Testis (tissue), 5 donors: ENCODE measurements at regions of chr17 and their contacts with region 1.

Region 1: GRCh38 chr17:55641676-55642081 is 81.0 kb downstream of the TMEM100 start:
- DNase-seq: peak; percentile 80
- H3K4me3 ChIP-seq: no peak overlapping the region
- H3K27ac ChIP-seq: no peak overlapping the region
- H3K4me1 ChIP-seq: no peaks in the 10 kb centered on the region
- H3K27me3 ChIP-seq: no peaks in the 10 kb centered on the region
- CTCF ChIP-seq: peak; percentile 24 to 62 (median 49)
- POLR2A ChIP-seq: no peak

Region 2: DNA sequence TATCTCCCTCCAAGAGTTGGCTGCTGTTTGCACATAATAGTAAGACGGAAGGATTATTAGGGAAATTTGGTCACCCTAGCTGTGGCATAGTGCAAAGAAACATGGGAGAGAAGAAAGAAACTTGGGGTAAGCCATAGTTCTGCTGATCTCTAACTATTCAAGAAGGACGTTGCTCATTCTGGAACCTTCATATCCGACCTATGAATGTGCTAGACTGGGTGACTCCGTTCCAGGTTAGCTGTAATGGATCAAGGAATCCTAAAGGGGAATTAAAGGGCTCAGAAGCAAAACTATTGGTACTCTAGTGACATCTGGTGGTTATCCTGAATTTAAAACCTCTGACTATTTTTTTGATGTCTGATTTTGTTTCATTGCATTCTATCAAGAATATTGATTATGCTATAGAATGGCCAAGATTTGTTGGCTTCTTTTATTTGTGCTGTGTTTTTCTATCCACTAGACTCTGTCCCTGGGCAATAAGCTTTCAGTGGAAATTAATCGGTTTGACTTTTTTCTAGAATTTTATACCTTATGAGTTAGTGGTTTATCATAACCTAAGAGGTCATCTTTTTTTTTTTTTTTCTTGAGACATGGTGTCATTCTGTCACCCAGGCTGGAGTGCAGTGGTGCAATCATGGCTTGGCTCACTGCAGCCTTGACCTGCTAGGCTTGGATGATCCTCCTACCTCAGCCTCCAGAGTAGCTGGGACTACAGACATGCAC is 128.6 kb after region 1 on chr17:
- intact Hi-C with region 1: loop called (anchors 10 kb)
- DNase-seq: no peak
- H3K4me3 ChIP-seq: no peak overlapping the region
- H3K27ac ChIP-seq: peak overlapping the region in 1 of 2 donors; percentile 10
- H3K4me1 ChIP-seq: no peaks in the 10 kb centered on the region
- H3K27me3 ChIP-seq: no peaks in the 10 kb centered on the region
- CTCF ChIP-seq: peak; percentile 40 to 62 (median 46)
- POLR2A ChIP-seq: no peak